Transverse colon (tissue), 4 donors: ENCODE measurements at regions of chr20 and their contacts with region 1.

Region 1: DNA sequence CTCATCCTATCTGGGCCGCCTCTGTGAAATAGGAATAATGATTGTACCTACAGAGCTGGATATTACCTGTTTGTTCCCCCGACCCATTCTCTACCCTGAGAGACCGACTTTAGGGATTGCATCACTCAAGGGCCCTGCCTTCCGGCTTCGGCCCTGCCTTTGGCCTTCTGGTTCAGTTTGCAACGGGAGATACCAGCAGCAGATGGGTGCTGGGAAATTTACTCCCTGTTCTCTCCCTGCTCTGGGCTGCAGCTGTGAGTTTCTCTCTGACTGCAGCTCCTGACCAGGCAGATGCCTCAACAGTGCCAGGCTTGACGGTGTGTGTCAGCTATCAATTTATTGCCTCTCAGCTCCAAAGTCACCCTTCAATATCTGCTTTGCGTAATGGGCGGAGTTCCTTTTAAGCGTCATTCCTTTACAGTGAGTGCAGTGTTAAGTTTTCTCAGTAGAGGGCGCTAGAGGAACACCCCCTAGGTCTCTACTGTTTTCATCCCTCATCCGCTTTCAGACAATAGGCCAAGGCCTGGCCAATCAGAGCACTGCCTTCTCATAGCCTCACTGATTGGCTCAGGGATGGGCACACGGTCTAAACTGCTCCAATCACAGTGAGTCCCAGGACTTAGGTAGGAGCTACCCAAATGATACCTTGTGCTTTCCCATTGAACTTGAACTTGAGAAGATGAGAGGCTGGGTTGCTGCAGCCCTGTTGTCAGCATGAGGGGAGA is 30.0 kb downstream of the KCNG1 start:
- DNase-seq: peak; percentile 51
- H3K4me3 ChIP-seq: no peak overlapping the region
- H3K27ac ChIP-seq: no peak overlapping the region
- H3K4me1 ChIP-seq: no peaks in the 10 kb centered on the region
- H3K27me3 ChIP-seq: peaks cover 10% of the 10 kb centered on the region
- CTCF ChIP-seq: peak; percentile 51 to 90 (median 71)
- EP300 ChIP-seq: no peak
- POLR2A ChIP-seq: no peak

Region 2: GRCh38 chr20:50919567-50919966 is 73.3 kb before region 1 on chr20:
- in situ Hi-C with region 1: no loop called
- intact Hi-C with region 1: no loop called
- DNase-seq: peak; percentile 35
- H3K4me3 ChIP-seq: no peak overlapping the region
- H3K27ac ChIP-seq: peak overlapping the region in 1 of 4 donors; percentile 14
- H3K4me1 ChIP-seq: peaks cover 22 to 93% (median 55%) of the 10 kb centered on the region in 4 donors
- H3K27me3 ChIP-seq: no peaks in the 10 kb centered on the region
- CTCF ChIP-seq: no peak
- EP300 ChIP-seq: no peak
- POLR2A ChIP-seq: no peak

Region 3: DNA sequence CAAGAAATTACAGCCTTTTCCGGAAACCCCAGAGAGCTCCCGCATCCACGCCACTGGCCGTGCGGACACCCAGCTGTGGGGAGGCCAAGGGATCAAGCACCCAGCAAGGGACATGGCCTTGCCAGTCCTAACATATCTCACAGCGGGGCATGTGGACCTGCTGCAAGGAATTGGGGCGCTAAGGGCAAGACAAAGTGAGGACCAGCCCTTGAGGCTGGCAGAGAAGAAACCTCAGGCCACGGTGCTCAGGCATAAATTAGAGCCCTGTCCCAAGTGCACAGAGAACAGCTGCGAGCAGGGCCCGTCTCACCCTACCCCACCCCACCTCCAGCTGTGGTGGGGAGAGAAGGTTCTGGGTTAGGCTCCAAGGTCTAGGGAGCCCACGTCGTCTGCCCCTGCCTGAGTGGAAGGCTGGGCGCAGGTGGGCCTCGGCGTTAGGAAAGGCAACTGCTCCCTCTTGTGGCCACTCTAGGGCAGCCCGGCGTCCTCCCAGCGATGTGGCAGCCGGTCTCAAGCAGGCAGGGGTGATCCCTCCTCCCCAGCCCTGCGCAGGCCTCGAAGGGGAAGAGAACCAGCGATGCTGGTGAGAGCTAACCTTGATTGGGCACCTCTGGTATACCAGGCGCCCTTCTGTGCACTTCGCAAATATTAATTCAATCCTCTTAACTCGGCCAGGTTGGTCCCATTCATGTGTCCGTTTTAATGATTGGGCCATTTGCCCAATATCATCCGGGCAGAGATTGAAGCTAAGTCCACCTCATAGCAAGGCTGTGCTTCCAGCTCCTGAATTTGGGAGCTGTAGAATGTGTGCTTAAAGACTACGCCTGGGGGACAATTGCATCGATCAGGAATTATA is 313.8 kb after region 1 on chr20:
- in situ Hi-C with region 1: loop called (anchors 5 to 10 kb)
- intact Hi-C with region 1: loop called (anchors 2 kb)
- DNase-seq: peak; percentile 79
- H3K4me3 ChIP-seq: no peak overlapping the region
- H3K27ac ChIP-seq: no peak overlapping the region
- H3K4me1 ChIP-seq: peaks cover 0 to 7% (median 0%) of the 10 kb centered on the region in 4 donors
- H3K27me3 ChIP-seq: peaks cover 8% of the 10 kb centered on the region
- CTCF ChIP-seq: peak; percentile 87 to 92 (median 89)
- EP300 ChIP-seq: no peak
- POLR2A ChIP-seq: no peak